T-cell (primary cell): ENCODE measurements at regions of chr2 and their contacts with region 1.

Region 1: GRCh38 chr2:218952160-218952559 is 7.3 kb upstream of the CDK5R2 start:
- DNase-seq: no peak
- ATAC-seq: no peak
- H3K4me3 ChIP-seq: no peak overlapping the region
- H3K4me3 Mint-ChIP-seq: no peak overlapping the region
- H3K27ac ChIP-seq: no peak overlapping the region
- H3K27ac Mint-ChIP-seq: no peak overlapping the region
- H3K4me1 ChIP-seq: no peaks in the 10 kb centered on the region
- H3K4me1 Mint-ChIP-seq: no peaks in the 10 kb centered on the region
- H3K27me3 ChIP-seq: peaks cover 4 to 42% of the 10 kb centered on the region in 2 experiments
- H3K27me3 Mint-ChIP-seq: peaks cover 52 to 56% of the 10 kb centered on the region in 2 donors

Region 2: GRCh38 chr2:218322895-218323808 is 629.0 kb before region 1 on chr2:
- CTCF ChIA-PET with region 1: no interaction called
- POLR2A ChIA-PET with region 1: interaction called in 1 of 2 experiments, 10 read pairs
- DNase-seq: peak in 32 of 35 experiments; percentile 12 to 70 (median 32)
- ATAC-seq: peak; percentile 69 to 74 (median 72)
- H3K4me3 ChIP-seq: peak overlapping the region; percentile 37 to 64
- H3K4me3 Mint-ChIP-seq: peak overlapping the region; percentile 76 to 85 (median 81)
- H3K27ac ChIP-seq: no peak overlapping the region
- H3K27ac Mint-ChIP-seq: peak overlapping the region in 1 of 2 donors; percentile 58
- H3K4me1 ChIP-seq: peaks cover 19 to 46% of the 10 kb centered on the region in 2 experiments
- H3K4me1 Mint-ChIP-seq: peaks cover 50 to 73% (median 60%) of the 10 kb centered on the region in 3 donors
- H3K27me3 ChIP-seq: peaks cover 0 to 17% of the 10 kb centered on the region in 2 experiments
- H3K27me3 Mint-ChIP-seq: peaks cover 0 to 8% of the 10 kb centered on the region in 2 donors

Region 3: GRCh38 chr2:218360447-218360846 is 591.7 kb before region 1 on chr2:
- CTCF ChIA-PET with region 1: no interaction called
- POLR2A ChIA-PET with region 1: no interaction called
- DNase-seq: no peak
- ATAC-seq: no peak
- H3K4me3 ChIP-seq: no peak overlapping the region
- H3K4me3 Mint-ChIP-seq: no peak overlapping the region
- H3K27ac ChIP-seq: no peak overlapping the region
- H3K27ac Mint-ChIP-seq: no peak overlapping the region
- H3K4me1 ChIP-seq: peaks cover 0 to 8% of the 10 kb centered on the region in 2 experiments
- H3K4me1 Mint-ChIP-seq: peaks cover 0 to 4% (median 2%) of the 10 kb centered on the region in 3 donors
- H3K27me3 ChIP-seq: peaks cover 0 to 4% of the 10 kb centered on the region in 2 experiments
- H3K27me3 Mint-ChIP-seq: no peaks in the 10 kb centered on the region